ENCODE measurements at regions of chr7 and their contacts with region 1.

Region 1: GRCh38 chr7:122082670-122083069 is 61.4 kb downstream of the AASS start:
- DNase-seq: no peak
- ATAC-seq: peak; percentile 58
- H3K4me3 Mint-ChIP-seq: no peak overlapping the region
- H3K27ac Mint-ChIP-seq: peak overlapping the region; percentile 97
- H3K4me1 Mint-ChIP-seq: peaks cover 68% of the 10 kb centered on the region
- H3K27me3 Mint-ChIP-seq: no peaks in the 10 kb centered on the region
- CTCF ChIP-seq: no peak

Region 2: DNA sequence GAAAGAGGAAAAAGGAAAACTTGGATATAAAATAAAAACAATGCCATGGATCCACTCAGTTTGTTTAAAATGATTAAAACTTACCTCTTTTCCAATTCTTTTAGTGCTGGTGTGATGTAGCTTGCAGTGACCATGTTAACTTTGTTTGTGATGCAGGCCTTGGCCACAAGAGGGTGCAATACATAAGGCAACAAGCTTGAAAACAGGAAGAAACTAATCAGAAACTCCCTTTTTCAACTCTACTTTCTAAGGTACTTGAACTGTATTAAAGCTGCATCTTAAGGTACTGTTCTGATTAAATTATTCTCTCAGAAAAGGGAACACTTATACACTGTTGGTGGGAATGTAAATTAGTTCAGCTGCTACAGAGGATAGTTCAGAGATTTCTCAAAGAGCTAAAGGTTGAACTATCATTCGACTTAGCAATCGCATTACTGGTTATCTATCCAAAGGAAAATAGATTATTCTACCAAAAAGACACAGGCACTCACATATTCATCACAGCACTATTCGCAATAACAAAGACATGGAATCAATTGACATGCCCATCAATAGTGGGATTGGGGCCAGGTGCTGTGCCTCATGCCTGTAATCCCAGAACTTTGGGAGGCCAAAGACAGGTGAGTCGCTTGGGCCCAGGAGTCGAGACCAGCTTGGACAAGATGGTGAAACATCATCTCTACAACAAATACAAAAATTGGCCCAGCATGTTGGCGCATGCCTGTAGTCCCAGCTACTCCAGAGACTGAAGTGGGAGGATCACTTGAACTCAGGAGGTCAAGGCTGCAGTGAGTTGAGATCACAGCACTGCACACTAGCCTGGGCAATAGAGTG is 10.5 kb after region 1 on chr7:
- CTCF ChIA-PET with region 1: interaction called, 18 read pairs
- POLR2A ChIA-PET with region 1: no interaction called
- DNase-seq: peak; percentile 84
- ATAC-seq: peak; percentile 50
- H3K4me3 Mint-ChIP-seq: no peak overlapping the region
- H3K27ac Mint-ChIP-seq: peak overlapping the region; percentile 87
- H3K4me1 Mint-ChIP-seq: peaks cover 28% of the 10 kb centered on the region
- H3K27me3 Mint-ChIP-seq: no peaks in the 10 kb centered on the region
- CTCF ChIP-seq: peak; percentile 77

Measured in WTC11 (cell line).